ENCODE measurements at regions of chr2 and their contacts with region 1.

Region 1: GRCh38 chr2:36355151-36355889 is at the start of gene CRIM1:
- DNase-seq: peak; percentile 53
- H3K4me3 Mint-ChIP-seq: peak within 1 kb of the TSS; percentile 70
- H3K27ac Mint-ChIP-seq: no peak within 1 kb of the TSS
- H3K4me1 Mint-ChIP-seq: peaks cover 33% of the 10 kb centered on the region
- H3K27me3 Mint-ChIP-seq: peaks cover 58% of the 10 kb centered on the region
- total RNA-seq, gene CRIM1: 5.4 to 6.6 TPM

Region 2: DNA sequence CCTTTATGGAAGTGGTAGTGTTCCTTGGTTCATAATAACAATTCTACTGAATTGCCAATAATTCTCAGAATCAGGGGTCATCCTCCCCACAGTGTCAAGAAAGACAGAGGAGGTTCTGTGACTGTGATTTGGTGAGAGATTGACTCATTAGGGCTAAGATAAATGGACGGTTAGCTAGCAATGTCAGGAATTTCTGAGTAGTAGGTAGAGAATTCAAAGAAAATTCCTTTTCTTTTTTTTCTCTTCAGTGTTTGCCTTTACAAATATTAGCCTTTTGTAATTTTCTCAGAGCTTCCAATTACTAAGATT is 16.5 kb before region 1 on chr2:
- CTCF ChIA-PET with region 1: interaction called, 12 read pairs
- POLR2A ChIA-PET with region 1: no interaction called
- DNase-seq: no peak
- H3K4me3 Mint-ChIP-seq: no peak overlapping the region
- H3K27ac Mint-ChIP-seq: no peak overlapping the region
- H3K4me1 Mint-ChIP-seq: peaks cover 20% of the 10 kb centered on the region
- H3K27me3 Mint-ChIP-seq: peaks cover 8% of the 10 kb centered on the region

Region 3: DNA sequence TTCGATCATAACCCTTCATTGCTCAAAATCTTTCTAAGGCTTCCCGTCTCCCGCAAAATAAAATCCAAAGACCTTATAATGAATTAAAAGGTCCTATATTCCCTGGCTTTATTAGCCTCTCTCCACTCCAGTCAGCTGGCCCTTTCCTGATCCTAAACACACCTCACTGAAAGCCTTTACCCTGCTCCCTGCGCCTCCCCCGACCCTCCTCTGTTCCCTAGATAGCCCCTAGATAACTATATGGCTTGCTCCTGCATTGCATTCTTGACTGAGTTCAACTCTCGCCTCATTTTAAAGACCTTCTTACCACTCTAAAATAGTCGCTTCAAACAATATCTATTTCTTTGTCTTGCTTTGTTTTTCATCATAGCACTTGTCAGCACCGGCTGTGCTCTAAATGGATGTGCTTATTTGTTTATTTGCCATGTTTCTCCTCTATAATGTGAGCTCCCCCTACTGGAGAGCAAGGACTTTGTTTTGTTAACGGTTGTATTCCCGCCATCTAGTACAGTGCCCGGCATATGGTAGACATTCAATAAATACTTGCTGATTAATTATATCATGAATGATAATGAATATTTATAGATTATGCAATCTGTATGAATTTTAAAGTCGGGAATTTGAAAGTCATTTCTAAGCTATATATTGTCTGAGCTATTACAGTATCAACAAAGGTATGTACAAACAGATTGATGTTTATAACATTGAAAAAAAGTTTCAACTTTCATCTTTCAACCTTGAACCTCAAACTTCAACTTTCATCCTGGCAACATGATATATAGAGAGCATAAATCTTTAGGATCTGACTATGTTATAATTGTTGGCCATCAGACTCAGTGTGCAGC is 308.8 kb after region 1 on chr2:
- CTCF ChIA-PET with region 1: interaction called, 25 read pairs
- POLR2A ChIA-PET with region 1: no interaction called
- DNase-seq: no peak
- H3K4me3 Mint-ChIP-seq: no peak overlapping the region
- H3K27ac Mint-ChIP-seq: no peak overlapping the region
- H3K4me1 Mint-ChIP-seq: no peaks in the 10 kb centered on the region
- H3K27me3 Mint-ChIP-seq: peaks cover 11% of the 10 kb centered on the region

Measured in activated CD4-positive, alpha-beta memory T cell treated with anti-CD3 and anti-CD28 coated beads, Interleukin-2, amount 10 ng/mL, durations not matched to agents 7 days and 5 days (primary cell).